ENCODE measurements at regions of chr2 and their contacts with region 1.

Region 1: GRCh38 chr2:221573430-221574230 is 1.5 kb upstream of the EPHA4 start:
- DNase-seq: peak; percentile 68 to 82
- H3K4me3 ChIP-seq: peak overlapping the region; percentile 56 to 79 (median 74)
- H3K27ac ChIP-seq: peak overlapping the region; percentile 76 to 89
- H3K4me1 ChIP-seq: no peaks in the 10 kb centered on the region
- H3K27me3 ChIP-seq: peaks cover 0 to 5% of the 10 kb centered on the region in 2 donors
- CTCF ChIP-seq: peak; percentile 96 to 97 (median 96)
- POLR2A ChIP-seq: no peak

Region 2: GRCh38 chr2:220296174-220296573 is 1277.5 kb before region 1 on chr2:
- intact Hi-C with region 1: no loop called
- DNase-seq: no peak
- H3K4me3 ChIP-seq: no peak overlapping the region
- H3K27ac ChIP-seq: no peak overlapping the region
- H3K4me1 ChIP-seq: no peaks in the 10 kb centered on the region
- H3K27me3 ChIP-seq: no peaks in the 10 kb centered on the region
- CTCF ChIP-seq: no peak
- POLR2A ChIP-seq: no peak

Region 3: DNA sequence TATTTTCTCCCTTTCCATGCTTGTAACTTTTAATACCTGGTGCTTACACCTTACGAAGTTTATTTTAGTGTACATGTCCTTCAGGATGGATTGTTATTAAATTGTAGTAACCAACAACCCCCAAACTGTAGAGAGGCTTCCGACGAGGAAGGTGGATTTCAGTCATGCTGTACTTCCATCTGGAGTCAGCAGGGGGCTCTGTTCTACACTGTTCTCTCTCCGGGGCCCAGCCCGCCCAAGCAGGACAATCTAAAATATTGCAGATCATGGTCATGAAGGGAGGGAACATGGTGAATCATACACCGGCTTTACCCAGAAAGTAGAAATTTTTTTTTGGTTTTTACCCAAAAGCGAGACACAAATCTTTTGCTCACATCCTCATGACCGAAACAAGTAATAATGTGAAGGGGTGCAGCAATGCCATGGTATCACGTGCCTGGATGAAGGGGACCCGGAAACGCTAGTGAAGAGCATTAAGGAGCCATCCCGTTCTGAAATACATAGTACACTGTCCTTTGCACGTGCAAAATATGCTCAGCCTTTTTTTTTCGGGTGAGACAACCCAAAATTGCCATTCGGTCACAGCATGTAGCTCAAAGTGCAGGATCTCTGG is 886.3 kb before region 1 on chr2:
- intact Hi-C with region 1: loop called (anchors 10 kb)
- DNase-seq: peak; percentile 56 to 61
- H3K4me3 ChIP-seq: no peak overlapping the region
- H3K27ac ChIP-seq: no peak overlapping the region
- H3K4me1 ChIP-seq: no peaks in the 10 kb centered on the region
- H3K27me3 ChIP-seq: no peaks in the 10 kb centered on the region
- CTCF ChIP-seq: peak; percentile 79 to 83 (median 83)
- POLR2A ChIP-seq: no peak

Region 4: GRCh38 chr2:221283896-221284545 is 289.6 kb before region 1 on chr2:
- intact Hi-C with region 1: no loop called
- DNase-seq: no peak
- H3K4me3 ChIP-seq: no peak overlapping the region
- H3K27ac ChIP-seq: no peak overlapping the region
- H3K4me1 ChIP-seq: no peaks in the 10 kb centered on the region
- H3K27me3 ChIP-seq: no peaks in the 10 kb centered on the region
- CTCF ChIP-seq: no peak
- POLR2A ChIP-seq: no peak

Region 5: GRCh38 chr2:221662689-221663391 is 89.2 kb after region 1 on chr2:
- intact Hi-C with region 1: no loop called
- DNase-seq: no peak
- H3K4me3 ChIP-seq: no peak overlapping the region
- H3K27ac ChIP-seq: no peak overlapping the region
- H3K4me1 ChIP-seq: no peaks in the 10 kb centered on the region
- H3K27me3 ChIP-seq: no peaks in the 10 kb centered on the region
- CTCF ChIP-seq: no peak
- POLR2A ChIP-seq: no peak

Region 6: GRCh38 chr2:221810245-221810644 is 236.6 kb after region 1 on chr2:
- intact Hi-C with region 1: no loop called
- DNase-seq: no peak
- H3K4me3 ChIP-seq: no peak overlapping the region
- H3K27ac ChIP-seq: no peak overlapping the region
- H3K4me1 ChIP-seq: no peaks in the 10 kb centered on the region
- H3K27me3 ChIP-seq: no peaks in the 10 kb centered on the region
- CTCF ChIP-seq: no peak
- POLR2A ChIP-seq: no peak